CD4-positive, alpha-beta memory T cell (primary cell): ENCODE measurements at regions of chr11 and their contacts with region 1.

Region 1: DNA sequence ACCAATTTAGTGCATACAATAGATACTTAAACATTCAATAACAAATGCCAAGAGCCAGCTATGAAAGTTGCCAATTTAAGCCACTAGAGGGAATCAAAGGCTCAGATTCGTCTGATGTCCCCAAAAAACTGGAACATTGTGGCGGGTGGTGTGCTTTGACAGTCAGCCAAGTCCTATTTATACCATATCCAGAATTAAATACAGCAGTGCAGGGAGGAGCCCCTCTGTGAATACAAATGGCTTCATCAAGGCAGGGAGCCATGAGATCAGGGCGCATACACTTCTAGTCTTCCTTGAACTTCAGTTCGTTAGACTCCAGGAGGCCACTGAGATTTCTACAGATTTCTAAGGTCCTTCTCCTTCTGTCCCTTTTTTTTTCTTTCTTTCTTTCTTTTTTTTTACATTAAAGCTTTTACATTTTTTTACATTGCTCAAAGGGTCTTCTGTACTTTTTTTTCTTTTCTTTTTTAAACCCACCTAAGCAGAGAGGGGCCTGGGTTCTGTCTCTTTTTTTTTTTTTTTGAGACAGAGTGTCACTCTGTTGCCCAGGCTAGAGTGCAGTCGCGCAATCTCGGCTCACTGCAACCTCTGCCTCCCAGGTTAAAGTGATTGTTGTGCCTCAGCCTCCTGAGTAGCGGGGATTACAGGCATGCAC is 41.5 kb upstream of the HSPA8 start:
- DNase-seq: peak in 4 of 5 donors; percentile 50 to 55 (median 52)
- H3K4me3 ChIP-seq: no peak overlapping the region
- H3K4me3 Mint-ChIP-seq: no peak overlapping the region
- H3K27ac ChIP-seq: no peak overlapping the region
- H3K27ac Mint-ChIP-seq: peak overlapping the region in 3 of 7 donors; percentile 1 to 85 (median 59)
- H3K4me1 ChIP-seq: peaks cover 16% of the 10 kb centered on the region
- H3K4me1 Mint-ChIP-seq: peaks cover 17 to 37% (median 26%) of the 10 kb centered on the region in 4 donors
- H3K27me3 ChIP-seq: no peaks in the 10 kb centered on the region
- H3K27me3 Mint-ChIP-seq: no peaks in the 10 kb centered on the region

Region 2: GRCh38 chr11:122910775-122911174 is 192.7 kb before region 1 on chr11:
- CTCF ChIA-PET with region 1: no interaction called
- POLR2A ChIA-PET with region 1: no interaction called
- intact Hi-C with region 1: no loop called
- DNase-seq: no peak
- H3K4me3 ChIP-seq: no peak overlapping the region
- H3K4me3 Mint-ChIP-seq: no peak overlapping the region
- H3K27ac ChIP-seq: no peak overlapping the region
- H3K27ac Mint-ChIP-seq: no peak overlapping the region
- H3K4me1 ChIP-seq: no peaks in the 10 kb centered on the region
- H3K4me1 Mint-ChIP-seq: no peaks in the 10 kb centered on the region
- H3K27me3 ChIP-seq: no peaks in the 10 kb centered on the region
- H3K27me3 Mint-ChIP-seq: no peaks in the 10 kb centered on the region

Region 3: GRCh38 chr11:123033895-123034294 is 69.6 kb before region 1 on chr11:
- CTCF ChIA-PET with region 1: interaction called, 10 read pairs
- POLR2A ChIA-PET with region 1: no interaction called
- intact Hi-C with region 1: no loop called
- DNase-seq: no peak
- H3K4me3 ChIP-seq: no peak overlapping the region
- H3K4me3 Mint-ChIP-seq: no peak overlapping the region
- H3K27ac ChIP-seq: no peak overlapping the region
- H3K27ac Mint-ChIP-seq: no peak overlapping the region
- H3K4me1 ChIP-seq: no peaks in the 10 kb centered on the region
- H3K4me1 Mint-ChIP-seq: peaks cover 0 to 2% (median 0%) of the 10 kb centered on the region in 4 donors
- H3K27me3 ChIP-seq: no peaks in the 10 kb centered on the region
- H3K27me3 Mint-ChIP-seq: peaks cover 2 to 3% of the 10 kb centered on the region in 2 donors

Region 4: DNA sequence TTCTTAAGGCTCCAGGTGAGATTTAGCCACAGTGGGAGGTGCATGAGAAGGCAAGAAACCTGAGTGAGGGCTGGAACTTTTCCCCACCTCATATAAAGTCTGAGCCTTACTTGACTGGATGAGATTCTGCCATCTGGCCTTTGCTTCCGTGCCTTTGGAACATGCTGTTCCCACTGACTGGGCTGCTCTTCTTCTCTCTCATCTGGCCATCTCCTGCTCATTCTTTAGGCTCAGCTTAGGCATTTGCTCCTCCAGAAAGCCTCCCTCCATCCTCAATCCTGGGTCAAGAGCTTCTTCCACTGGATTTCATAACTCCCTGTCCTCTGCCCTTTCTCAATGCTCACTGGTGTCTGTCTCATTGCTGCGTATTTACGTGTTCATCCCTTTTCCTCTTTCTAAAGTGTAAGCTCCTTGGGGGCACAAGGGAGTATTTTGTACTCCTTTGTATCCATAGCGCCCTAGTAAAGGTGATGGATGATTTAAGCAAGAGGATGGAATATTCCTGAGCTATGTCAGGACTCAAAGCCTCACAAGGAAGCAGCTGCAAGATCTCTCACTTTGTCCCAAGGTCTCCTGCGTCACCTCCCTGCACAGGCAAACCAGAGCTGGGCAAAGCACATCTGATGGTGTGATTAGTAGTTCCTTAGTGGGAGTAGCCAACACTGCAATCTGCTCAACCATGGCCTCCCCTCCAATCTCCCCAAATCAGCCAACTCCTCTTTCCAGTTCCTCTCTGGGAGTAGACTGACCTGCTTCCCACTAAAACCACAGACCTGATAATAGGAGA is 56.8 kb before region 1 on chr11:
- CTCF ChIA-PET with region 1: interaction called, 414 read pairs
- POLR2A ChIA-PET with region 1: no interaction called
- intact Hi-C with region 1: no loop called
- DNase-seq: no peak
- H3K4me3 ChIP-seq: no peak overlapping the region
- H3K4me3 Mint-ChIP-seq: no peak overlapping the region
- H3K27ac ChIP-seq: no peak overlapping the region
- H3K27ac Mint-ChIP-seq: peak overlapping the region in 1 of 7 donors; percentile 19
- H3K4me1 ChIP-seq: no peaks in the 10 kb centered on the region
- H3K4me1 Mint-ChIP-seq: no peaks in the 10 kb centered on the region
- H3K27me3 ChIP-seq: no peaks in the 10 kb centered on the region
- H3K27me3 Mint-ChIP-seq: no peaks in the 10 kb centered on the region

Region 5: GRCh38 chr11:123062158-123062891 is 41.1 kb before region 1 on chr11:
- CTCF ChIA-PET with region 1: interaction called, 414 read pairs
- POLR2A ChIA-PET with region 1: interaction called, 236 read pairs
- intact Hi-C with region 1: loop called (anchors 1 kb)
- DNase-seq: peak; percentile 100
- H3K4me3 ChIP-seq: peak overlapping the region; percentile 92 to 95
- H3K4me3 Mint-ChIP-seq: peak overlapping the region; percentile 97 to 100 (median 99)
- H3K27ac ChIP-seq: peak overlapping the region; percentile 99
- H3K27ac Mint-ChIP-seq: peak overlapping the region; percentile 95 to 99 (median 97)
- H3K4me1 ChIP-seq: peaks cover 61% of the 10 kb centered on the region
- H3K4me1 Mint-ChIP-seq: peaks cover 40 to 83% (median 52%) of the 10 kb centered on the region in 4 donors
- H3K27me3 ChIP-seq: no peaks in the 10 kb centered on the region
- H3K27me3 Mint-ChIP-seq: no peaks in the 10 kb centered on the region

Region 6: GRCh38 chr11:123069908-123070821 is 33.3 kb before region 1 on chr11:
- CTCF ChIA-PET with region 1: interaction called, 414 read pairs
- POLR2A ChIA-PET with region 1: interaction called, 49 read pairs
- intact Hi-C with region 1: loop called (anchors 1 kb)
- DNase-seq: peak; percentile 58 to 73 (median 59)
- H3K4me3 ChIP-seq: peak overlapping the region; percentile 11 to 39
- H3K4me3 Mint-ChIP-seq: peak overlapping the region; percentile 81 to 94 (median 88)
- H3K27ac ChIP-seq: peak overlapping the region; percentile 69
- H3K27ac Mint-ChIP-seq: peak overlapping the region; percentile 90 to 100 (median 97)
- H3K4me1 ChIP-seq: peaks cover 71% of the 10 kb centered on the region
- H3K4me1 Mint-ChIP-seq: peaks cover 46 to 69% (median 56%) of the 10 kb centered on the region in 4 donors
- H3K27me3 ChIP-seq: no peaks in the 10 kb centered on the region
- H3K27me3 Mint-ChIP-seq: no peaks in the 10 kb centered on the region

Region 7: GRCh38 chr11:123083623-123084029 is 19.8 kb before region 1 on chr11:
- CTCF ChIA-PET with region 1: interaction called, 121 read pairs
- POLR2A ChIA-PET with region 1: interaction called, 38 read pairs
- intact Hi-C with region 1: loop called (anchors 1 kb)
- DNase-seq: peak; percentile 56 to 91 (median 72)
- H3K4me3 ChIP-seq: peak overlapping the region in 1 of 2 donors; percentile 3
- H3K4me3 Mint-ChIP-seq: peak overlapping the region; percentile 73 to 88 (median 78)
- H3K27ac ChIP-seq: peak overlapping the region; percentile 45
- H3K27ac Mint-ChIP-seq: peak overlapping the region; percentile 93 to 96 (median 93)
- H3K4me1 ChIP-seq: peaks cover 57% of the 10 kb centered on the region
- H3K4me1 Mint-ChIP-seq: peaks cover 31 to 66% (median 50%) of the 10 kb centered on the region in 4 donors
- H3K27me3 ChIP-seq: no peaks in the 10 kb centered on the region
- H3K27me3 Mint-ChIP-seq: no peaks in the 10 kb centered on the region

Region 8: GRCh38 chr11:123261345-123262106 is 158.1 kb after region 1 on chr11:
- CTCF ChIA-PET with region 1: interaction called, 19 read pairs
- POLR2A ChIA-PET with region 1: no interaction called
- intact Hi-C with region 1: loop called (anchors 1 kb)
- DNase-seq: peak in 4 of 5 donors; percentile 28 to 38 (median 35)
- H3K4me3 ChIP-seq: no peak overlapping the region
- H3K4me3 Mint-ChIP-seq: peak overlapping the region in 5 of 8 donors; percentile 32 to 71 (median 49)
- H3K27ac ChIP-seq: no peak overlapping the region
- H3K27ac Mint-ChIP-seq: peak overlapping the region in 2 of 7 donors; percentile 4 to 59
- H3K4me1 ChIP-seq: peaks cover 7% of the 10 kb centered on the region
- H3K4me1 Mint-ChIP-seq: peaks cover 2 to 9% (median 7%) of the 10 kb centered on the region in 4 donors
- H3K27me3 ChIP-seq: peaks cover 4% of the 10 kb centered on the region
- H3K27me3 Mint-ChIP-seq: peaks cover 19 to 27% of the 10 kb centered on the region in 2 donors

Region 9: GRCh38 chr11:123316003-123316402 is 212.6 kb after region 1 on chr11:
- CTCF ChIA-PET with region 1: no interaction called
- POLR2A ChIA-PET with region 1: no interaction called
- intact Hi-C with region 1: no loop called
- DNase-seq: no peak
- H3K4me3 ChIP-seq: no peak overlapping the region
- H3K4me3 Mint-ChIP-seq: no peak overlapping the region
- H3K27ac ChIP-seq: no peak overlapping the region
- H3K27ac Mint-ChIP-seq: no peak overlapping the region
- H3K4me1 ChIP-seq: no peaks in the 10 kb centered on the region
- H3K4me1 Mint-ChIP-seq: no peaks in the 10 kb centered on the region
- H3K27me3 ChIP-seq: no peaks in the 10 kb centered on the region
- H3K27me3 Mint-ChIP-seq: peaks cover 3 to 10% of the 10 kb centered on the region in 2 donors

Region 10: GRCh38 chr11:123547180-123547579 is 443.7 kb after region 1 on chr11:
- CTCF ChIA-PET with region 1: no interaction called
- POLR2A ChIA-PET with region 1: no interaction called
- intact Hi-C with region 1: no loop called
- DNase-seq: no peak
- H3K4me3 ChIP-seq: no peak overlapping the region
- H3K4me3 Mint-ChIP-seq: no peak overlapping the region
- H3K27ac ChIP-seq: no peak overlapping the region
- H3K27ac Mint-ChIP-seq: no peak overlapping the region
- H3K4me1 ChIP-seq: no peaks in the 10 kb centered on the region
- H3K4me1 Mint-ChIP-seq: peaks cover 0 to 2% (median 0%) of the 10 kb centered on the region in 4 donors
- H3K27me3 ChIP-seq: no peaks in the 10 kb centered on the region
- H3K27me3 Mint-ChIP-seq: no peaks in the 10 kb centered on the region